Mammary epithelial cell (primary cell): ENCODE measurements at regions of chr1 and their contacts with region 1.

Region 1: DNA sequence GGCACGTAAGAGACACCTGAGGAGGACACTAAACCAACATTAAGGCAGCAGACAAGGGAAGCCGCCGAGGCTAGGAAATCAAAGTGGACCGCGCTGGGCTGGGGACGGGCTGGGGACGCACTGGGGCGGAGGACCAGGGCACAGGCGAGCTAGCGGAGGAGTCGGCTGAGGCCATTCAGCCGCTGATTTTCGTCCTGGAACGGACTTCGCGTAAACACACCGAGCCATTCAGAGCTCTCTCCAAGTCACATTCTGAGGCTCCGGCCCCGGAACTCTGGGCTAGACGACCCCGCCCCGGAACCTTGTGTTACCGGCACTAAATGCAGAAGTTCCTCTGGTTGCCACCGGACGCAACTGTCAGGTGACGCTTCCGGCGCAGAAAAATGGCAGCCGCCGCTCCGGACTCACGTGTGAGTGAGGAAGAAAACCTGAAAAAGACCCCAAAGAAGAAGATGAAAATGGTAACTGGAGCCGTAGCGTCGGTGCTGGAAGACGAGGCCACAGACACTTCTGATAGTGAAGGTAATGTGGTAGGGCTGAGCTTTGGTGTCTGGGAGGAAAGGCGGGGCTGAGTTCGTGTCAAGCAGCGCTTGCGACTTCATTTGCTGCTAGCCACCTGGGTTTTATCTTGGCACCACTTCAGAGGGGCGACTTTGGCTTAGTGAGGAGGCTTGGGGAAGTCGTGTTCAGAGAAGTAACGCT is at the start of gene RRP15:
- DNase-seq: peak; percentile 84
- H3K4me3 ChIP-seq: peak within 1 kb of the TSS; percentile 82 to 97 (median 88)
- H3K27ac ChIP-seq: peak within 1 kb of the TSS; percentile 62
- H3K4me1 ChIP-seq: peaks cover 16% of the 10 kb centered on the region
- H3K27me3 ChIP-seq: no peaks in the 10 kb centered on the region
- CTCF ChIP-seq: no peak
- total RNA-seq, gene RRP15: 8.5 to 36.2 TPM

Region 2: DNA sequence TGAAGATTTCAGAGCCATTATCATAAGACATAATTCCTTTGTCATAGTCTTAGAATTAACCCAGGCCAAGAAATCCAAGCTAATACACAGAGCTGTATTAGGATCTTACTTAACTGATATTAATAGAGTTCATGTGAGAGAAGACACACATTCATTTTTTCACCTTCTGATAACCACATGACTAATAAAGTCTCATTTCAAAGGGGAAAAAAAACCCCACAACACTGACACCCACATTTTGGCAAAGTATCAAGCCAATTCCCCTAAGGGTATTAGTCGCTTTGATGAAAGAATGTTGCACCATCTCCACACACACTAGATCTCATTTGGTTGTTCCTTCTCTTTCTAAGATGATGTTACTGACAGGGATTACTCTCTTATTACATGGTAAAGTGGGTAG is 1217.4 kb before region 1 on chr1:
- CTCF ChIA-PET with region 1: no interaction called
- dilution Hi-C with region 1: no loop called
- in situ Hi-C with region 1: no loop called
- intact Hi-C with region 1: no loop called
- DNase-seq: peak; percentile 56
- H3K4me3 ChIP-seq: no peak overlapping the region
- H3K27ac ChIP-seq: no peak overlapping the region
- H3K4me1 ChIP-seq: no peaks in the 10 kb centered on the region
- H3K27me3 ChIP-seq: peaks cover 2% of the 10 kb centered on the region
- CTCF ChIP-seq: no peak

Region 3: DNA sequence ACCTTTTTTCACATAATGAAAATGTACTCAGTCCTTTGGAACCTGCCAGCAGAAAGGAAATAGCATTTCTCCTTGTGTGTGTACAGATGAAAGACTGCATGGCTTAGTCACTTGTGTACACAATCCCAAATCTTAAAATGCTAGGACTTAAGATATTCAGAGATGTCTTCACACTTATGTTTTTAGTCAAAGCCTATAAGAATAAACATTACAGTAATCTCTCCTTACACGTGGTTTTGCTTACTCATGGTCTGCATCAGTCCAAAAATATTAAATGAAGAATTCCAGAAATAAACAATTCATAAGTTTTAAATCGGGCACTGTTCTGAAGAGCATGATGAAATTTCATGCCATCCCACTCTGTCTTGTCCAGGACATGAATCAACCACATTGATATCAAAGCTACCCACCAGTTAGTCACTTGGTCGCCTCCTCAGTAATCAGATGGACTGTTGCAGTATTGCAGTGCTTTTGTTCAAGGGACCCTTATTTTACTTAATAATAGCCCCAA is 75.7 kb before region 1 on chr1:
- CTCF ChIA-PET with region 1: no interaction called
- dilution Hi-C with region 1: no loop called
- in situ Hi-C with region 1: no loop called
- intact Hi-C with region 1: loop called (anchors 10 kb)
- DNase-seq: peak; percentile 55
- H3K4me3 ChIP-seq: no peak overlapping the region
- H3K27ac ChIP-seq: no peak overlapping the region
- H3K4me1 ChIP-seq: peaks cover 17% of the 10 kb centered on the region
- H3K27me3 ChIP-seq: no peaks in the 10 kb centered on the region
- CTCF ChIP-seq: no peak